HepG2 (cell line): ENCODE measurements at regions of chr9 and their contacts with region 1.

Region 1: DNA sequence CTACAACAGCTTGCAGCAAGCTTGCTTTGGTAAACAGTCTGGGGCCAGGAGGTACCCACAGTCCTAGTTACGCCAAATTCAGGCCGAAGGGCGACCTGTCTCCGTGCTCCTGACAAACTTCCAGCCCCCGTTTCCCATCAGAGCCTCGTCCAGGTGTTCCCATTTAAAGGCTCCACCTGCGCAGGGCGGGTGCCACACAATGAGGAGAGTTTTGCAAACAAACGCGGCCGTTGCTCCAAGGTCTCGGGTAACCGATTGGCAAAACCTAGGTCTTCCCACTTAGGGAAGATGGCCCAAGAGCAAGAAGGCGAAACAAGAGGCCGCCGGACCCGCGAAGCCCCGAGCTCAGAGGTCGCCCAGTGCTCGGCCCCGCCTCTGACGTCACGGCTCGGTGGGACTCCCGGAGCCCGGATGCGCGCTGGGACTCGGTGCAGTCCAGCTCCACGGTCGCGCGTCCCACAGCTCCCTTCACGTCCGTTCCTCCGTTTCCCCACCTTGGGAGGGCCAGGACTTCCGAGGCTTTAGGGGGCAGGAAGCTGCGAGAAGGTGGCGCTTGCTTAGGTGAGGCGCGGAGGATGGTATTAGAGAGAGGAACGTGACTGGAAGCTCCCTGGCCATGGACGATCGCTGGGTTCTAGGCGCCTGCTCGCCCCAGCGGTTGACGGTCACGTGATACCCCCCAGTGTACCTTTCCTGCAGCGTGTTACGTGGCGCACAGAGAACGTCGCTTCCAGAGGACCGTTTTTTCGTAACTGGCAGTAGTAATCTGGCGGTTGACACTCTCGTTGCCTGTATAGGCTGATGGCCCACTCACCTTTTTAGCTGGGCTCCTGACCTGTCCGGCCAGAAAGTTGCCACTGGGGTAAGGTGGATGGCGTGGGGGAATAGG is 41.8 kb upstream of the KDM4C start:
- DNase-seq: peak; percentile 79
- ATAC-seq: peak; percentile 89
- H3K4me3 ChIP-seq: peak overlapping the region; percentile 57 to 72 (median 65)
- H3K27ac ChIP-seq: peak overlapping the region; percentile 93
- H3K4me1 ChIP-seq: peaks cover 34% of the 10 kb centered on the region
- H3K27me3 ChIP-seq: no peaks in the 10 kb centered on the region
- CTCF ChIP-seq: 0 out of 2 replicates have a peak, but pooled peaks have one; percentile 16
- EP300 ChIP-seq: no peak
- POLR2A ChIP-seq: peak; percentile 85 to 93
- RAD21 ChIP-seq: no peak

Region 2: GRCh38 chr9:5920860-5921328 is 795.1 kb before region 1 on chr9:
- CTCF ChIA-PET with region 1: no interaction called
- POLR2A ChIA-PET with region 1: no interaction called
- in situ Hi-C with region 1: no loop called
- intact Hi-C with region 1: no loop called
- DNase-seq: no peak
- ATAC-seq: no peak
- H3K4me3 ChIP-seq: no peak overlapping the region
- H3K27ac ChIP-seq: no peak overlapping the region
- H3K4me1 ChIP-seq: no peaks in the 10 kb centered on the region
- H3K27me3 ChIP-seq: no peaks in the 10 kb centered on the region
- CTCF ChIP-seq: no peak
- EP300 ChIP-seq: no peak
- POLR2A ChIP-seq: no peak
- RAD21 ChIP-seq: no peak

Region 3: DNA sequence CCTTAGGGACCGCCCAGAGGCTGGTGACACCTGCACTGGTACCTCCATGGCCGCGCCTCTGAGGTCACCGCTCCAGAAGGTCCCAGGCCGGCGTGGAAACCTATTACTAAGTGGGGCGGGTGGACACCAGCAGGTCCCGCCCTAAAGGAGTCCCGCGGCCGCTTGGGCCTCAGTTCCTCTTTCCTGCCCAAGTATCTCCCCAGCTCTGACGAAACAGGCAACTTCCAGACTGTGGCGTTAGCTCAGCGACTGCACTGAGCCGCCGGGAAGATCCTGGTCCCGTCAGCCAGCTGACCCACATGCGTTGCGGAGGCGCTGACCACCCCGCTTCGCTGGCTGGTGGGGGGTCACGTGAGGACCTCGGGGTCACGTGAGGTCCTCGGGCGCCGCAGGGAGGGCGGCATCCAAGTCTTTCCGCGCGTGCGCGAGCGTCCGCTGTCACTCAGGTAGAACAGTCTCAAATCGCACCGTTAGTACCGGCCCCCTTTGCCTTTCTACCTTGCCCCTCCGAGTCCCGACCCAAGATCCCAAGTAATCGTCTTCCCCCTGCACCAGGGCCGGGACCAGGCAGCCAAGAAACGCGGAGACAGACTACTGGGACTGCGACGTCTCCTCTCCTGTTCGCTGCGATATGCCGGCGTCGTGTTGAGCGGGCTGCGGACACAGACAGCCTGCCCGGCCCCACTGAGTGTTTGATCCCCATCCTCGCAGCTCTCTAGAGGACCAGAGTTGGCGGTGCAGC is 11.9 kb before region 1 on chr9:
- CTCF ChIA-PET with region 1: no interaction called
- POLR2A ChIA-PET with region 1: interaction called, 54 read pairs
- in situ Hi-C with region 1: no loop called
- intact Hi-C with region 1: no loop called
- DNase-seq: peak; percentile 68
- ATAC-seq: peak; percentile 88
- H3K4me3 ChIP-seq: peak overlapping the region; percentile 42 to 68 (median 59); a peak in 5 of 6 replicates
- H3K27ac ChIP-seq: peak overlapping the region; percentile 58
- H3K4me1 ChIP-seq: peaks cover 29% of the 10 kb centered on the region
- H3K27me3 ChIP-seq: no peaks in the 10 kb centered on the region
- CTCF ChIP-seq: no peak
- EP300 ChIP-seq: no peak
- POLR2A ChIP-seq: peak; percentile 45 to 74; a peak in 3 of 4 replicates
- RAD21 ChIP-seq: no peak

Region 4: GRCh38 chr9:6902423-6902822 is 186.4 kb after region 1 on chr9:
- CTCF ChIA-PET with region 1: no interaction called
- POLR2A ChIA-PET with region 1: no interaction called
- in situ Hi-C with region 1: no loop called
- intact Hi-C with region 1: no loop called
- DNase-seq: no peak
- ATAC-seq: no peak
- H3K4me3 ChIP-seq: no peak overlapping the region
- H3K27ac ChIP-seq: peak overlapping the region; percentile 99
- H3K4me1 ChIP-seq: peaks cover 95% of the 10 kb centered on the region
- H3K27me3 ChIP-seq: no peaks in the 10 kb centered on the region
- CTCF ChIP-seq: no peak
- EP300 ChIP-seq: no peak
- POLR2A ChIP-seq: no peak
- RAD21 ChIP-seq: no peak